ENCODE measurements at regions of chr20 and their contacts with region 1.

Region 1: DNA sequence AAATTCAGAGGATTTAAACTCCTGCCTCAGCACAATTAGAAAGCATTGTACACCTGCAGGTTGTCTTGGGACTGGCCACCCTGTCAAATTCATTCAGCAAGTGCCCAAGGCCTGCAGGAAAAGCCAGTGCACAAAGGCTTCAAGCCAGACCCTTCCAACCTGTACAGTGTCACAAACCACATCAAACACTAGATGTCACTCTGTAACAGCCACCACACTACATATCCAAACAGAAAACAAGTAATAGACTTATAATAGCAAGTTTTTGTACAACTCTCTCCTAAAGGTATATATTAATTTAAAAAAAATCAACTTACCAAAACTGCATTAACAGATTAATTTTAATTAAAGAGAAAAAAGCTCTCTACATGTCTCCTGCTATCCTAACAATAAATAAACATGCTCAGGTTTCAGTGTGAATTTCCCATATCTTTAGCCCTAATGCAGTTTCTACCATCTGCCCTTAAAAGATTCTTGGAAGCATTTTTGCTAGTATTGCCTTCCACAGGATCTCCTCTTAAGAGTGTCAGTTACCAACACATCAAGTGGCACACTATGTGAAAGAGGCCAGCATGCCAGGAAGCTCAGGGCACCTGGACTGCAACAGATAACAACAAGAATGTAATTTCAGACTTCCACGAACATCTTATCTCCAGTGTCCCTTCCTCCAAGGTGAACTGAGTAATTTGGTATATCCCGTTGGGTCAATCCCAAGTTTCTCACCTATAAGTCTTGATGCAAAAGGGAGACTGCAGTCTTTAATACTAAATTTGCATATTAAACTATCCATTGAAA is 47.5 kb downstream of the RALGAPA2 start:
- DNase-seq: peak; percentile 33
- H3K4me3 ChIP-seq: no peak overlapping the region
- H3K27ac ChIP-seq: no peak overlapping the region
- H3K4me1 ChIP-seq: no peaks in the 10 kb centered on the region; a peak in 2 of 4 replicates
- H3K27me3 ChIP-seq: no peaks in the 10 kb centered on the region
- CTCF ChIP-seq: peak; percentile 58
- EP300 ChIP-seq: no peak
- RAD21 ChIP-seq: peak; percentile 84

Region 2: DNA sequence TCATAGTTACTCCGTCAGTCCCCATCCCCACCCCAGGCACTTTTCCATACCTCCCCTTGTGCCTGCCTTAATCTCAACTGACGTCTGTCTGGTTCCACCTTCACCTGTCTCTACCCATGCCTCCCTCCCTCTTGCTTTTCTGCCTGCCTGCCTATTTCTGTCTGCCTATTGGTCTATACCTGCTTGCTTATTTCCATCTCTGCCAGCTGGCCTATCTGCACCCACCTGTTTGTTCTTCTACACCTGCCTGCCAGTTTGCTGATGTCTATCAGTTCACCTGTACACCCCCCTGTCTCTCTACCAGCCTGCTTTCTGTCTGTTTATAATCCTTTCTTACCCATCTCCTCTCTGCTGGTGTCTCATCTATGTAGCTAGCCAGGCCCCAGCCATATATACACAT is 40.1 kb before region 1 on chr20:
- CTCF ChIA-PET with region 1: no interaction called
- POLR2A ChIA-PET with region 1: no interaction called
- DNase-seq: no peak
- H3K4me3 ChIP-seq: no peak overlapping the region
- H3K27ac ChIP-seq: no peak overlapping the region
- H3K4me1 ChIP-seq: no peaks in the 10 kb centered on the region
- H3K27me3 ChIP-seq: no peaks in the 10 kb centered on the region
- CTCF ChIP-seq: no peak
- EP300 ChIP-seq: no peak
- RAD21 ChIP-seq: no peak

Region 3: DNA sequence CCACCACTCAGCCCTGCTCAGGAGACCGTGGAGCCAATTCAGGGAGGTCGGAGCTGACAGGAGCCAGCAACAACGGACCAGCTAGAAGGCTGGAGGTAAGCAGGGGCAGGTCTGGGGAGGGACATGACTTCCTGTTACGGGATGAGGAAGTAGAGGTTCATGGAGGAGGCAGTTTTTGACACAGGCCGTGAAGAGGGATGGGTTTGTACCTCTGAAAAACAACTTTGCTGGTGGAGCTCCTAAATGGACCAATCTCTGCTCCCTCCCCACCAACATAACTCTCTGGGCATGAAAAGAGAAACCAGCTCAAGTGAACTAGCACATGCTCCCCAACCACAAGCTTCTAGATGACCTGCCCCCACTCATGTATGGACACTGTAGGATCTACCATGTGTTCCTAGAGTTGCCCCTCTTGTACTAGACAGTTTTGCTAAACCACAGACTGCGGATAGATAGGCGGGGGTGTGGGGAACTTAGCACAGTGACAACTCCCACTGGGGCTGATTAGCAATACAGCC is 16.1 kb after region 1 on chr20:
- CTCF ChIA-PET with region 1: interaction called, 14 read pairs
- POLR2A ChIA-PET with region 1: no interaction called
- DNase-seq: no peak
- H3K4me3 ChIP-seq: no peak overlapping the region
- H3K27ac ChIP-seq: no peak overlapping the region
- H3K4me1 ChIP-seq: no peaks in the 10 kb centered on the region
- H3K27me3 ChIP-seq: no peaks in the 10 kb centered on the region
- CTCF ChIP-seq: no peak
- EP300 ChIP-seq: no peak
- RAD21 ChIP-seq: no peak